HEK293T (cell line): ENCODE measurements at regions of chr17 and their contacts with region 1.

Region 1: GRCh38 chr17:79991140-79991923 is 44.3 kb downstream of the TBC1D16 start:
- DNase-seq: peak; percentile 91

Region 2: DNA sequence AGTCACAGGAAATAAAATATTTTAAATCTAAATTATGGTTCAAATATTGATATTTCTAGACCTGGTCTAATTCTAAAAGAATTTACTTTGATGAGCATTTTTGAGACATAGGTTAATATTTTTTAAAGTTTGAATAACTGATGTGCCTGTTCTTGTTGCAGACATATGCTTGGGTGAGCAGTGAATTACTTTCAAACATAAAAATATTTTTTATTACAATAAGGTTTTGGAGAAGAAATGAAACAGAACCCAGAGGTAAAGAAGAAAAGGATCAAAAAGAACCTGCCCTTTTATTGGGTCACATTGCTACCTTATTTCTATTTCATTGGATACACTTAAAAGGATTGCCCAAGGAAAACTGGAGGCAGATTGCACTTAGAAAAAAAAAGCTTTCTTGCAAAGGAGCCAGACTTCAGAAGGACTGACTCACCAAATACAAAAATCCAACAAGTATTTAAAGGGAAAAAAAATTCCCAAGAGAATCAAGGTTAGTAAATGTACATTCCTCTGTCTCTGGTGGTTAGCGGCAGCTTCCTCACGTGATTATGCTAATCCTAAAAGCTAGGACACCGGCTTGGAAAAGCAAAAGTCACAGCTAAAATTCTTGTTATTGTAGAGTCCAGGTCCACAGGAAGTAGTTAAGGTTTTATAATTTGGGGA is 242.0 kb before region 1 on chr17:
- CTCF ChIA-PET with region 1: interaction called, 3 read pairs
- POLR2A ChIA-PET with region 1: interaction called, 12 read pairs
- DNase-seq: no peak

Region 3: DNA sequence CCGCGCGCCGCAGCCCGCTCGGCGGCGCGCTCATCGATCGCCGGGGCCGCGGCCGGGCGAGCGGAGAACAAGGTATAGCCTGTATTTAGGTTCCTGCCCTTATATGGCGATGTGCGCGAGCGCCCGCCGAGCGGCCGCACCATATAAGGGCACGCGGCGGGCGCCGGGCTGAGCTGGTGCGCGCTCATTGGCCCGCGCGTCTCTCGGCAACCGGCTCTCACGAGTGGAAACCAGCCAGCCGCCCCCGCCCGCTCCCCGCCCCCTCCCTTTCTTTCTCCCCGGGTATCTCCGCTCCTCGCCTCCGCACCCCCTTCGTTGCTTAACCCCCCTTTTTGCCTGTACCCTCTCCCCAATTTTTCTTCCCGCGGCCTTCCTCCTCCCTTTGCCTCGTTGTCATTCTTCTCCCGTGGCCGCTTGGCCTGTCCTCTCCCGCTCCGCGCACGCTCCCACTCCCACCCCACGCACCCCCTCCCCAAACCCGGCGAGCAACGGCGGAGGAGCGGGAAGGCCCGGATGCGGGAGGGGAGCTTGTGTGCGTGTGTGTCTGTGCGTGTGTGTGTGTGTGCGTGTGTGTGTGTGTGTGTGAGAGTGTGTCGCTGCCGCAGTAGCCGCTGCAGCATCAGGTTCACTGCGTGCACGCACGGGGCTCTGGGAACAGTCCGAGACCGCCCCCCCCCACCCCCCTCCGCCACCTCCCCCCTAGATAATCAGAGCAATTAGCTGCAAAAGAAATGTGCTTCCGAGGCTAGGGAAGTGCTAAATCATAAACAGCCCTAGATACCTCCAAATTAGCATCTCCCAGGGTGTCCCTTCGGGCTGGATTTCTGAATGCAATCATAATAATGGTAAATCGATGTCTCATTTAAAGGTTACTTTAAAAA is 181.0 kb before region 1 on chr17:
- CTCF ChIA-PET with region 1: interaction called, 3 read pairs
- POLR2A ChIA-PET with region 1: interaction called, 38 read pairs
- DNase-seq: peak; percentile 91

Region 4: DNA sequence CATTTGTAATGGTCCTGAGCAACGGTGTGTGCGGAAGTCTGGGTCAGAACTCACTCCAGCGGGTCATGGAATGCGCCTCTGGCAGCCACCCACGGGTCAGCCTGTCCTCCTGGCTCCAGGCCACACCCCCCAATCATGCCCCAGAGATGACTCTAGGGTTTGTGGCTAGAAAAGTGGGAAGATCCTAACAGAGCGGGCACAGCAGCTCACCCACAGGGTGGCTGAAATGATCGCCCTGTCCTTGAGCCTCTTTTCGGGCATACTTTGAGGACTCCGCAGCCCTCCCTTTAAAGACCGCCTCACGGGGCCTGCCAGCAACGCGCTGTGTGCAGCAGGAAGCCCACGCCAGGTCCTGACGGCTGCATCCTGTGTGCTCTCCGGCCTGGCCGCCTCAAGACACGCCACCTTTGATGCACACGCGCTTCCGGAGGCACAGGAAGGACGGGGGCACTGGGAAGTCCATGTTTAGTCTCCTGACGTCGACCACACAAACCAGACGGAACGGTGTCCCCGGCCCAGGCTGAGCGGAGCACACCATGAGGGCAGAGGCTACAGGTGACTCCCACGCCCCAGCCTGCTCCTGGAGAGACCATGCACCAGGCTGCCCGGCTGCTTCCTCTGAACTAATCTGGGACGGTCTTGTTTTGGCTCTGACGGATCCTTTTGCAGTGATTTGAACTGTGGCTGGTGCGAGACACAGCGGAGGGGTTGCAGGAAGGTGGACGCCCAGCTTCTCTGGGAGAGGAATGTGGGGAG is 48.6 kb before region 1 on chr17:
- CTCF ChIA-PET with region 1: no interaction called
- POLR2A ChIA-PET with region 1: no interaction called
- DNase-seq: no peak

Region 5: GRCh38 chr17:79970576-79971068 is 20.7 kb before region 1 on chr17:
- CTCF ChIA-PET with region 1: interaction called, 14 read pairs
- POLR2A ChIA-PET with region 1: interaction called, 4 read pairs
- DNase-seq: peak; percentile 73